Posterior cingulate gyrus (tissue), 11 donors: ENCODE measurements at regions of chr21 and their contacts with region 1.

Region 1: DNA sequence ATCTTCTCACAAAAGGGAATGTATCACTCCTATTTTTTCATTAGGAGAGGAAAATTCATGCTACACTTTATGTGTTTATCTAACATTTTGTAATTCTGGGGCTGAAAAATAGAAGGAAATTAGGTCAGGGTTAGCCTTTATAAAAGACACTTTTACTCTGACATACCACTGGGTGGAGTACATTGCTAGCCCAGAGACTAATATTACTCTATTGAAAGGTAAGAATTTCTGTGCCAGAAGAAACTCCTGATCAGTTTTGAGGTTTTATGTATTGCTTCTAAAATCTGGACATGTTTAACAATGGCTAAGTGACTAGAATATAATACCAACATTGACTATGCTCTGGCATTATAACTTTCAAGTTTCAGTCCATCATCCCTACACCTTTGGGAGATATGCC is 724.6 kb downstream of the USP25 start:
- DNase-seq: no peak

Region 2: DNA sequence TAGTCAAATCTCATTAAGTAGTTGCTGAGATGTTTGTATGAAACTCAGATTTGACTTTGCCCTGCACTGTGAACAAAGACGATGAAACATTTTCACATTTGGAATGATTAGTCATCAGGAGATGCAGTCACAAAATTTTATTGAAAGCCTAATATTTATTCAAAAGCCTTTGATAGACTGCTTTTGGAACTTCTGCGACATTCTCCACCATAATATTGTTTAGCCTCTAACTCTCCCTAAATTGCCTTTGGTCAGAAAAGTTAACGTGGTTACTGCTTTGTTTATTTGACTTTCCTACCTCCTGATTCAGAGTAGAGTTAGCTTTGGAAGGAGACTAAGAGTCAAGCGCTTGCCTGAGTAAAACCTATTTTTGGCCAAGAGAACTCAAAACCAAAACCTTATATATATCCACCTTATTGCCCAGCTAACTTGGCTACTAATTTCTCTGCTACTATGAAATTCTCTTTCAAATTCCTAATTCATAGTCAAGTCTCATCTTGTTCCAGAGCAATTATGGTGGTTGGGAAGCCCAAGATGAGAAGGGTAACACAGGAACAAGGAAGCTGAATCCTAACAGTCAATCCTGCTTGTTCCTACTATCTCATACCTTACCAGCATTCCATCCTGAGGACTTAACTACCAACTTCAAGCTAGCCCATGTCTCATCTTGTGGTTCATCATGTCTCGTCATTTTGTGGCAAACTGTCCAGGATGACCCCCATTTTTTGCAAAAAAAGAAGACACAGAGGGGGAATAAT is 295.0 kb before region 1 on chr21:
- intact Hi-C with region 1: no loop called
- DNase-seq: no peak

Region 3: GRCh38 chr21:16588433-16588860 is 134.0 kb after region 1 on chr21:
- intact Hi-C with region 1: no loop called
- DNase-seq: peak; percentile 83 to 98 (median 90)

Region 4: GRCh38 chr21:16608209-16608830 is 153.9 kb after region 1 on chr21:
- intact Hi-C with region 1: loop called (anchors 10 kb)
- DNase-seq: no peak

Region 5: DNA sequence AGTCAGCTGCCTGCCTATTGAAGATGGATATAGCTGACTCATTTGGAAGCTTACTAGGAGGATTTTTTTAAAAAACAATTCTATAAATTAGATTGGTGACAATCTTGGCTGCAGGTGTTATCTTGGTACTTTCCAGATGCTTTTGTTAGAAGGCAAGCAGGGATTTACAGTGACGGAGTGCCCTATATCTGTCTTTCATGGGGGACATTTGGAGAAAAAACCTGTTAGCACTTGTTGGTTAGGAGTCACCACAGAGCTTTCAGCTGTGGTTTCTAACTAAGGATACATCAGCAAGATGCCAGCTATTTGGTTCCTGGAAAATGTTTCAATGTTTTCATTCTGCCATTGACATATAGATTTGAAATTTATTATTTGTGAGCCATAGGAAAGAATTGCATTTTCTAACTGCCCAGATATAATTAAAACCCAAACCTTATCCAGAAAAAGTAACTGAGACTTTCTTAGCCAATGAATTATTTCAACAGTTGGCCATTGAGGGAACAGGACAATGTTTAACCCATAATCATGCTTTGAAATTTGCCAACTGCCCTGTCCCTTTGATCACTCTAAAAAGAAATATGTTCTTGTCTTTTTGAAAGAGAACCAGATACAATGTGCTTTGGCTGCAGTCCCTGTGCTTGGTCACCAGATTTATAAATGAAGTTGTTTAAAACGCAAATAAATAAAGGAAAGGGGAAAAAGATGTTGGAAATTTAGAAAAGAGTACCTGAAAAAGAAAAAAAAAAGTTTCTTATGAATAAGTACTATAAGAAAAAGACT is 297.5 kb after region 1 on chr21:
- intact Hi-C with region 1: no loop called
- DNase-seq: no peak